ENCODE measurements at regions of chr1 and their contacts with region 1.

Region 1: GRCh38 chr1:156385534-156386031 is 16.6 kb downstream of the RHBG start:
- DNase-seq: peak; percentile 72 to 81
- H3K4me3 ChIP-seq: no peak overlapping the region
- H3K4me1 ChIP-seq: no peaks in the 10 kb centered on the region
- H3K27me3 ChIP-seq: peaks cover 21% of the 10 kb centered on the region

Region 2: DNA sequence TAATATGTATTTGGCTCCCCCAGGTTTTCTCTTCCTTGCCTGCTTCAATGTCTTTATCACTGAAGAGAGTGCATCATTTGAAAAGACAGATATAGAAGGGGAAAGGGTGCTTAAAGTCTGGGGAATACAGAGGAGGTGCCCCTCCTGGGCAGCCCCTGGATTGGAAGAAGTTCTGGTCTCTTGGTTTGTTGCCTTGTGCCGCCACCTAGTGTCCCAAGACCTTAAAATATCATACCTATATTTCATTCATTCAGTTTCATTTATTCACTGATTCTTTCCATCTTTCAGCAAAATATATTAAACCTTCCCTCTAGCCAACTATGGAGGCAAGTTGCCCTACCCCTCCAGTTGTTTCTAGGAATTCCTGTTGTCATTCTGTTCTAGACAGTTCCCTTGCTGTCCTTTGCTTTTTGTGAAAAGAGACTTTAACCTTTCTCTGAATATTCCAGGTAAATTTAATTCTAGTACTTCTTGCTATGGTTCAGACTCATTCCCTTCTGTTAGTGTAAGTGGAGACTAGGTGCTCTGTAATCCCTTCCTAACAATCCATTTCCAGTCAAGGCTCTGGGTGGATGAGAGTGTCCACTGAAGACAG is 58.9 kb after region 1 on chr1:
- in situ Hi-C with region 1: loop called (anchors 5 kb)
- DNase-seq: peak; percentile 36 to 59
- H3K4me3 ChIP-seq: no peak overlapping the region
- H3K4me1 ChIP-seq: peaks cover 6% of the 10 kb centered on the region
- H3K27me3 ChIP-seq: peaks cover 56% of the 10 kb centered on the region

Measured in HAP-1 (cell line).